OCI-LY7 (cell line): ENCODE measurements at regions of chr19 and their contacts with region 1.

Region 1: DNA sequence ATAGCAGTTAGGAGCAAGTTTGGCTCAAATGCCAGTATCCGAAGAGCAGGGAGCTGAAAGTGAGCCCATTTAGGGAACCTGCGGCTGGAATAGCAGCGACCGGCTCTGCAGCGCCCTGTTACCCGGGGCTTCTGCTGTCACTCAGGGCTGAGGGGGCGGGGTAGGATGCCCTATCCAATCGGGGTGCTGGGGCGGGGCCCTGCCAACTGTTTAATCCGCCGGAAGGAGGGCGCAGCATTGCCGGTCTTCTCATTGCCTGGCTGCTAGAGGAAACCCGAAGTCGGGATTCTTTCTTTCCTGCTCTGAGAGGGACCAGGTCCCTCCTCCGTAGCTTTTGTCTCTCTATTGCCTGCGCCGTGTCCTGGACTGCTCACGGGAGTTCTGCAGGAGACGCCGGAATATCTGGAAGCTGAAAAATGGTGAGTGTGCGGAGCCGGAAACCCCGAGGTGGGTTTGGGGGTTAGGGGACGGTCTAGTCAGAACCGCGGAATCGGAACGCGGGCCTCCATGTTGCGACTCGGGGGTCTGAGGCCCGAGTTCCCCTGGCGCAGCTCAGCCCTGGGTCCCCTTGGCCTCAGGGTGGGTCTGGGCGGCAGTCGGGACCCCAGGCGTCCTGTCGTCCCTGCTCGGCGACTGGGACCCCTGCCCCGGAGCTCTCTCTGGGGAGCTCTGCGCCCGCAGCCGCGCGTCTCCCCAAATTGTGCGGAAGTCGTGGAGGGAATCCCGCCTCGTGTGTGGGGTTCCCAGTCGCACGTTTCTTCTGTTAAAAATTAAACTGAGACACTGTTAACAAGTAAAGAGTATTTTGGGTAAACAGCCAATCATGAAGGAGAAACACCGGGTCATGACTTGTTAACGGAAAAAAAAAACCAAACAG is 22.8 kb downstream of the ZNF763 start:
- DNase-seq: peak; percentile 96
- H3K4me3 ChIP-seq: peak overlapping the region; percentile 96
- H3K27ac ChIP-seq: peak overlapping the region; percentile 88
- H3K4me1 ChIP-seq: peaks cover 48% of the 10 kb centered on the region
- CTCF ChIP-seq: no peak

Region 2: DNA sequence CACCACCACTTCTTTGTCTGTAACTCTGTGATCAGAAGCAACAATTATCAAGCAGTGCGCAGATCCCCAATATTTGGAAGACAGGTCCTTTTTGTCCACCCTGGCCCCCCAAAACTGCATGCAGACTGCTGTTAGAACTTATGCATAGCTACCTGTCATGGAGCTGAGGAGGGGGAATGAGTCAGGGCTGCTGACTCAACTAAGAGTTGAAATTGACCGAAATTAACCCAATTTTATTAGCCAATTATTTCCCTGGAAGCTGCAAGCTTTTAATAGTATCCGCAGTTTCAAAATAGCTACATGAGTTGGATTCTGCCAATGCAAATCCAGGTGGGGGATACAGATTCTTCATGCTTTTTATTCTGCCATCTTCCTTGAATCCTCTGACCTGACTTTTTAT is 203.3 kb before region 1 on chr19:
- CTCF ChIA-PET with region 1: no interaction called
- POLR2A ChIA-PET with region 1: no interaction called
- intact Hi-C with region 1: no loop called
- DNase-seq: no peak
- H3K4me3 ChIP-seq: no peak overlapping the region
- H3K27ac ChIP-seq: no peak overlapping the region
- H3K4me1 ChIP-seq: no peaks in the 10 kb centered on the region
- CTCF ChIP-seq: no peak

Region 3: GRCh38 chr19:11798391-11799330 is 189.0 kb before region 1 on chr19 and contains the start of gene ZNF491:
- CTCF ChIA-PET with region 1: no interaction called
- POLR2A ChIA-PET with region 1: no interaction called
- intact Hi-C with region 1: loop called (anchors 1 kb)
- DNase-seq: peak; percentile 94
- H3K4me3 ChIP-seq: peak within 1 kb of the TSS; percentile 75
- H3K27ac ChIP-seq: peak within 1 kb of the TSS; percentile 34
- H3K4me1 ChIP-seq: peaks cover 32% of the 10 kb centered on the region
- CTCF ChIP-seq: peak; percentile 61
- total RNA-seq, gene ZNF491: 1.2 and 2.0 TPM in 2 replicates

Region 4: GRCh38 chr19:11881151-11881800 is 106.4 kb before region 1 on chr19:
- CTCF ChIA-PET with region 1: no interaction called
- POLR2A ChIA-PET with region 1: no interaction called
- intact Hi-C with region 1: loop called (anchors 1 kb)
- DNase-seq: peak; percentile 72
- H3K4me3 ChIP-seq: no peak overlapping the region
- H3K27ac ChIP-seq: no peak overlapping the region
- H3K4me1 ChIP-seq: no peaks in the 10 kb centered on the region
- CTCF ChIP-seq: peak; percentile 83

Region 5: DNA sequence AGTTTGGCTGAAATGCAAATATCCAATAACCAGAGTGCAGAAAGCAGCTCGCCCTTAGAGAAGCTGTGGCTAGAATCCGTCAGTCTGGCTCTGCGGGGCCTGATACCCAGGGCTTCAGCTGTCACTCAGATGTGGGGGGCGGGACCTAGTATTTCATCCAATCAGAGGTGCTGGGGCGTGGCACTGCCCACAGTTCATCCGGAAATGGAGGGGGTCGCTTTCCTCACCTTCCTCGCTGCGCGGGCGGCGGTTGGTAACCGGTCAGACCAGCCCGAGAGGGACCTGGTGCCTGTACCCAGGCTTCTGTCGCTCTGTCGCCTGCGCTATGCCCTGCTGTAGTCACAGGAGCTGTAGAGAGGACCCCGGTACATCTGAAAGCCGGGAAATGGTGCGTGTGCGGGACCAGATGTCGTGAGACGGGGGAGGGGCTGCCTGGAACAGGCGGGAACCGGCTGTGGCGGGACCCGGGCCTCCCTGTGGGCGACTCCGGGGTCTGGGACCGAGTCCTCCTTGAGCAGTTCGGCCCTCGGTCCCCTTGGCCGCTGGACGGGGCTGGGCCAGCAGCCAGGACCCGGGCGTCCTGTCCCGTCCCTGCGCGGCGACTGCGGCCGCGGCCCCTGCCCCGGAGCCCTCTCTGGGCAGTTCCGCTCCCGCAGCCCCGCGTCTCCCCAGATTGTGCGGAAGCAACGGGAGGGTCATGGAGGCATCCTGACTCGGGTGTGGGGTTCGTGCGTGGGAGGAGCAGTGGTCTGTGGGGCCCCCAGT is 62.6 kb before region 1 on chr19 and contains the start of gene ZNF700:
- CTCF ChIA-PET with region 1: interaction called, 8 read pairs
- POLR2A ChIA-PET with region 1: interaction called, 4 read pairs
- intact Hi-C with region 1: loop called (anchors 1 kb)
- DNase-seq: peak; percentile 97
- H3K4me3 ChIP-seq: peak within 1 kb of the TSS; percentile 86
- H3K27ac ChIP-seq: peak within 1 kb of the TSS; percentile 94
- H3K4me1 ChIP-seq: peaks cover 17% of the 10 kb centered on the region
- CTCF ChIP-seq: no peak
- total RNA-seq, gene ZNF700: 18.2 and 20.4 TPM in 2 replicates

Region 6: GRCh38 chr19:11964858-11965645 is 22.6 kb before region 1 on chr19 and contains the start of gene ZNF763:
- CTCF ChIA-PET with region 1: interaction called, 7 read pairs
- POLR2A ChIA-PET with region 1: interaction called, 3 read pairs
- intact Hi-C with region 1: loop called (anchors 1 kb)
- DNase-seq: peak; percentile 95
- H3K4me3 ChIP-seq: peak within 1 kb of the TSS; percentile 85
- H3K27ac ChIP-seq: peak within 1 kb of the TSS; percentile 63
- H3K4me1 ChIP-seq: peaks cover 15% of the 10 kb centered on the region
- CTCF ChIP-seq: no peak
- total RNA-seq, gene ZNF763: 2.7 and 2.8 TPM in 2 replicates

Region 7: GRCh38 chr19:12156223-12157058 is 168.8 kb after region 1 on chr19 and contains the start of gene ZNF625:
- CTCF ChIA-PET with region 1: interaction called, 5 read pairs
- POLR2A ChIA-PET with region 1: no interaction called
- intact Hi-C with region 1: loop called (anchors 5 kb)
- DNase-seq: peak; percentile 79
- H3K4me3 ChIP-seq: peak within 1 kb of the TSS; percentile 92
- H3K27ac ChIP-seq: peak within 1 kb of the TSS; percentile 31
- H3K4me1 ChIP-seq: peaks cover 15% of the 10 kb centered on the region
- CTCF ChIP-seq: no peak
- total RNA-seq, gene ZNF625: 7.3 and 7.8 TPM in 2 replicates